Vagina (tissue), 2 donors: ENCODE measurements at regions of chr10 and their contacts with region 1.

Region 1: DNA sequence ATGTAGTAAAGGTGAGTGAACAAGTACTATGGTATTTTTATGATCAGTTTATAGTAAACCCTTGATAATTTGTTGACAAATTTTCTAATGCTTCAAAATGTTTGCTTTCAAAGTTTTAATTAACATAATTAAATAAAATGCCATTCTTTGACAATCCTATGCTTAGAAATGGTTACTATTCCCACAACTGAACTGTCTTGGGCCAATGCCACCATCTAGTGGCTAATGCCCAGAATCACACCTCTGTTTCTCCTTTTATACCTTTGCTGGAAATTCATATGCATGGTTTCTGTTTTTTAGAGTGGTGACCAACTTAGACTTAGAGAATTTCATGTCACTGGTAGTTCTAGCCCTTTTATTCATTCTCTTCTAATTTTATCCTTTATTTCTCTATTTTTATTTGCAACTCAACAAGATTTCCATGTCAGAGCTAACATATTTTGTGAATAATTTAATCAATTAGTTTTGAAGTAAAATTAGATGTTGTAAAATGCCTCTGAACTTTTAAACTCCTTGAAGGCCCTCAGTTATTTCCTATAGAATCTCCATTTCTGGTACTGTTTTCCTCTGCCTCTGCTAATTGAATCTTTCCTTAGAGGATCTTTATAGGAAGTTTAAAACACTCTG is 31.1 kb downstream of the PCGF5 start:
- DNase-seq: no peak
- H3K4me3 ChIP-seq: no peak overlapping the region
- H3K27ac ChIP-seq: no peak overlapping the region
- H3K4me1 ChIP-seq: no peaks in the 10 kb centered on the region
- H3K27me3 ChIP-seq: no peaks in the 10 kb centered on the region
- CTCF ChIP-seq: peak; percentile 80 to 94 (median 83)
- POLR2A ChIP-seq: no peak

Region 2: DNA sequence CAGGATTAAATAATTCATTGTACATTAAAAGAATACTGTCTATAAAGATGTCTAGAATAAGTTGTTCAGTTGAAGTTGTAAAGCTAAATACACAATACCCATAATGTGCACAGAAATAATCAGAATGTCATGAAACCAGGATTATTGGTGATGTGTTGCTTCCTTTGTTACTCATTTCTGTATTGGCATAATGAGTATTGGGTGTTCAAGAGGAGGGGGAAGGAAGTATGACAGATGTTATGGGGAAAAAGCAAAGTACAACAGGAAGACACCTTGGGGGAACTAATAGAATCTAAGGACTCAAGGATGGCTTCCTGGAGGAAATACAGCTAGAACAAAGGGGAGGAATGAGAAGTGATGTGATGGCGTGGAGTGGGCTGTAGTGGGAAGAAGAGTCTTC is 345.6 kb before region 1 on chr10:
- intact Hi-C with region 1: loop called (anchors 5 kb)
- DNase-seq: no peak
- H3K4me3 ChIP-seq: no peak overlapping the region
- H3K27ac ChIP-seq: no peak overlapping the region
- H3K4me1 ChIP-seq: no peaks in the 10 kb centered on the region
- H3K27me3 ChIP-seq: no peaks in the 10 kb centered on the region
- CTCF ChIP-seq: no peak
- POLR2A ChIP-seq: no peak

Region 3: GRCh38 chr10:91006001-91006751 is 245.4 kb before region 1 on chr10:
- intact Hi-C with region 1: loop called (anchors 5 kb)
- DNase-seq: no peak
- H3K4me3 ChIP-seq: no peak overlapping the region
- H3K27ac ChIP-seq: peak overlapping the region; percentile 15
- H3K4me1 ChIP-seq: no peaks in the 10 kb centered on the region
- H3K27me3 ChIP-seq: no peaks in the 10 kb centered on the region
- CTCF ChIP-seq: peak; percentile 64 to 94 (median 92)
- POLR2A ChIP-seq: no peak

Region 4: DNA sequence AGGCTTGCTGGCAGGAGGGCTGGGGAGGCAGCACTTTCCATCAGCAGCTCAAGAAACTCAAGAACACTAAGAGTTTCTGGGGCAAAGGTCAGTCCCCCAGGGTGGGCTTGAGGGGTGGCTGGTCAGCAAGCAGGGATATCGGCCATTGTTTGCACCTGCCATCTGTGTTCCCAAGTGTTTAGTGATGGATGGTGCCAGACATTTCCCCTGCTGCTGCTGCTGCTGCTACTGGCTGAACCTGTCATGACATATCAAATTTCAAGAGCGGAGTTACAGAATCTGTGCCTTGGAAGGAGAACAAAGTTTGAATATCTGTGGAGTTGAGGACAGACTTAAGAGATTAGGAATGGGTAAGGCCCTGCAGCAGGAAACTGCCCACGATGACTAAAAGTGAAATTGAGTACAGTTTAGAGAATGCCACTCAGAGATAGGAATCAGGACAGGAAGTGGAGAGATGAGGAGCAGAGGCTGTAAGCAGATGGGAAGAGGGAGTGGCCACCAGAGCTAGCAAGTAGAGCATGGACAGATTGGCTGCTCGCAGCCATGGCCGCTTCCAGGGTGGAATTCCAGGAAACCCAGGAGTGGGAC is 420.6 kb after region 1 on chr10:
- intact Hi-C with region 1: no loop called
- DNase-seq: no peak
- H3K4me3 ChIP-seq: no peak overlapping the region
- H3K27ac ChIP-seq: no peak overlapping the region
- H3K4me1 ChIP-seq: no peaks in the 10 kb centered on the region
- H3K27me3 ChIP-seq: no peaks in the 10 kb centered on the region
- CTCF ChIP-seq: no peak
- POLR2A ChIP-seq: no peak